Endothelial cell of umbilical vein (primary cell): ENCODE measurements at regions of chr11 and their contacts with region 1.

Region 1: DNA sequence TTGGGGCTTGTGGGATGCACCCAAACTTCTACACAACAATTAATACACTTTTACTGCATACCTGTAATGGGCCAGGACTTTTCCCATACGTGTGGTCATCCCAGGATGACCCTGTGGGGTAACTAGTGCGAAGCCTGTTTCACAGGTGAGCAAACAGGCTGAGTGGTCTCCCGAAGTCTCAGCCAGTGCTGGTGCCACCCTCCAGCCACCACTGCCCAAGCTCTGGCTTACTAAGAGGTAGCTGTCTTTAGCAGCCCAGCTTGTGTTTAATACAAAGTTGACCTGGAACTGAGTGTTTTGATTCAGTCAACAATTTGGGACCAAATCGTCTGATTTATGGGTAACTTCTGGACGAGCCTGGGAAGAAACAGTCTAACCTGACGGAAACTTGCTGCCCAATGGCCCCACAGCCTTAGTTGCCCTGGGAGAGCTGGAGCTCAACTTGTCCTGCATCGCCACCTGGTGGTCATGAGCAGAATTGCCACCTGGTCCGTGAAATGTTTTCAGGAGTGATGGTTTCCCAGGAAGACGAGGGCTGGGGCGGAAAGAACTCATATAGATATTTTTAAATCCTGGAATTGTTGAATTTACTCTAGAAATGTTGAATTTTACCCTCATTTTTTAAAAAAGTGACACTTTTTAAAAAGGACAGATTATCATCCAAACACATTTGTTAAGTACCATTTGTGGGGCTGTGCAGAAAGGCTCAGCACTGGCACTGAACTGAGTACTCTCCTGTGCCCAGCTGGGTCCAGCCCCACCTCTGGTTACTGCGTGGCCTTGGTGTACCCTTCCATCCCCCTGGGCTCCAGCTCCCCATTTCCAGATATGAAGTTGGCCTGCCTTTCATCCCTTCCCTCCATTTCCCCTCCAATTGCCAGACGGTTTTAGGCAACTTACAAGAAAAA is 95.5 kb upstream of the PARVA start:
- DNase-seq: peak; percentile 81
- H3K4me3 ChIP-seq: no peak overlapping the region
- H3K27ac ChIP-seq: no peak overlapping the region
- H3K4me1 ChIP-seq: peaks cover 27% of the 10 kb centered on the region
- H3K27me3 ChIP-seq: no peaks in the 10 kb centered on the region
- CTCF ChIP-seq: peak; percentile 82 to 91
- POLR2A ChIP-seq: no peak

Region 2: GRCh38 chr11:12052676-12053605 is 228.9 kb before region 1 on chr11:
- CTCF ChIA-PET with region 1: interaction called, 219 read pairs
- POLR2A ChIA-PET with region 1: no interaction called
- dilution Hi-C with region 1: no loop called
- intact Hi-C with region 1: no loop called
- DNase-seq: no peak
- H3K4me3 ChIP-seq: no peak overlapping the region
- H3K27ac ChIP-seq: no peak overlapping the region
- H3K4me1 ChIP-seq: no peaks in the 10 kb centered on the region
- H3K27me3 ChIP-seq: no peaks in the 10 kb centered on the region
- CTCF ChIP-seq: peak in 1 of 2 donors; percentile 5
- POLR2A ChIP-seq: no peak

Region 3: DNA sequence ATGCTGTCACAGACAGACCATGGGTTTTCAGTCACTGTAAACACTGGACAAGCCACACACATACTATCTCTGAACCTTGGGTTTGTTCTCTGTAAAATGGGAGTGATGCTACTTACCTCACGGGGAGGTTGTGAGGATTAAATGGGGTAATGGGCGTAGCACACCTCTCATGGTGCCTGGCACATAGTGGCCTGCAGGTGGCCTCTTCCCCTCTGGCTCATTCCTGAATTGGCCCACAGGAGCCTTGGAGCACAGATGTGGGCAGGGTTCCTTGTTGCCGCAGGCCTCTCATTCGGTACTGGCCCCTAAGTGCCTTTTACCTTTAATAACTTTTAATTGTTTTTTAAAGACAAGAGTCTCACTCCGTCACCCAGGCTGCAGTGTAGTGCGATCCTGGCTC is 159.7 kb before region 1 on chr11:
- CTCF ChIA-PET with region 1: interaction called, 5 read pairs
- POLR2A ChIA-PET with region 1: no interaction called
- dilution Hi-C with region 1: no loop called
- intact Hi-C with region 1: loop called (anchors 1 kb)
- DNase-seq: no peak
- H3K4me3 ChIP-seq: no peak overlapping the region
- H3K27ac ChIP-seq: no peak overlapping the region
- H3K4me1 ChIP-seq: peaks cover 38% of the 10 kb centered on the region
- H3K27me3 ChIP-seq: no peaks in the 10 kb centered on the region
- CTCF ChIP-seq: peak; percentile 43 to 56
- POLR2A ChIP-seq: no peak

Region 4: GRCh38 chr11:12269104-12269441 is 12.8 kb before region 1 on chr11:
- CTCF ChIA-PET with region 1: interaction called, 12 read pairs
- POLR2A ChIA-PET with region 1: no interaction called
- dilution Hi-C with region 1: no loop called
- intact Hi-C with region 1: no loop called
- DNase-seq: peak; percentile 55
- H3K4me3 ChIP-seq: no peak overlapping the region
- H3K27ac ChIP-seq: peak overlapping the region; percentile 68
- H3K4me1 ChIP-seq: peaks cover 21% of the 10 kb centered on the region
- H3K27me3 ChIP-seq: no peaks in the 10 kb centered on the region
- CTCF ChIP-seq: no peak
- POLR2A ChIP-seq: no peak